HCT116 (cell line): ENCODE measurements at regions of chr19 and their contacts with region 1.

Region 1: DNA sequence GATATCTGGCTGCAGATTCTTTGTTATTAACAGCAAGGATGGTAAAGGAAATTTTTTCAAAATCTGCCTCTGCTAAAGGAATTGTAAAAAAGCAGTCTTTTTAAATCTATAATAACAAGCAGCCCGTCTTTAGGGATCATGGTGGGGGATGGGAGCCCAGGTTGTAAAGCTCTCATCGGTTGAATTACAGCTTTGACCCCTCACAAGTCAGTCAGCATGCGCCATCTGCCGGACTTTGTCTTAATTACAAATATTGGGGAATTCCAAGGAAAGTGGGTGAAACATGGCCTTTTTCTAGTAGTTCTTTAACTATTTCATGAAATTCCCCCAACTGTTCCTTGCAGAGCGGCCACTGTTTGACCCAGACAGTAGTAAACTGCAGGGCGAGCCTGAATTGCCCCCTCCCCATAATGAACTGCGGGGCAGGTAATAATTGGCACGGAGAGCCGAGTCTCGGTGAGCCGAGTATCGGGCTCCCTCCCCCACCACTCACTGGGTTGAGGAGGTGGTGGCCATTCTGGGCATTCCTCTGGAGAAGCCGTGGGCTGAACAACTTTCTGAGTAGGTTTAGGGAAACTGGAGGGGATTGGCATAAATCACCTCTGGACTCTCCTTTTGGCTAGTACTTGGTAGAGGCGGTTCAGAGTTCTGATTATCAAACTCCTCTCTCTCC is 11.6 kb downstream of the ZNF578 start:
- DNase-seq: peak; percentile 2
- ATAC-seq: no peak
- H3K4me3 ChIP-seq: no peak overlapping the region
- H3K27ac ChIP-seq: no peak overlapping the region
- H3K4me1 ChIP-seq: no peaks in the 10 kb centered on the region
- H3K27me3 ChIP-seq: no peaks in the 10 kb centered on the region
- CTCF ChIP-seq: peak in 2 of 3 experiments; percentile 18 to 32; a peak in 3 of 6 replicates
- POLR2A ChIP-seq: no peak
- RAD21 ChIP-seq: peak; percentile 34

Region 2: GRCh38 chr19:52248241-52248640 is 216.7 kb before region 1 on chr19:
- CTCF ChIA-PET with region 1: no interaction called
- POLR2A ChIA-PET with region 1: no interaction called
- RAD21 ChIA-PET with region 1: no interaction called
- intact Hi-C with region 1: loop called (anchors 10 kb)
- DNase-seq: peak; percentile 16
- ATAC-seq: peak; percentile 62; the same call in 1 of the 2 replicates
- H3K4me3 ChIP-seq: no peak overlapping the region
- H3K27ac ChIP-seq: no peak overlapping the region
- H3K4me1 ChIP-seq: no peaks in the 10 kb centered on the region
- H3K27me3 ChIP-seq: no peaks in the 10 kb centered on the region
- CTCF ChIP-seq: peak; percentile 29 to 35 (median 30); a peak in 4 of 6 replicates
- POLR2A ChIP-seq: no peak
- RAD21 ChIP-seq: peak; percentile 64

Region 3: DNA sequence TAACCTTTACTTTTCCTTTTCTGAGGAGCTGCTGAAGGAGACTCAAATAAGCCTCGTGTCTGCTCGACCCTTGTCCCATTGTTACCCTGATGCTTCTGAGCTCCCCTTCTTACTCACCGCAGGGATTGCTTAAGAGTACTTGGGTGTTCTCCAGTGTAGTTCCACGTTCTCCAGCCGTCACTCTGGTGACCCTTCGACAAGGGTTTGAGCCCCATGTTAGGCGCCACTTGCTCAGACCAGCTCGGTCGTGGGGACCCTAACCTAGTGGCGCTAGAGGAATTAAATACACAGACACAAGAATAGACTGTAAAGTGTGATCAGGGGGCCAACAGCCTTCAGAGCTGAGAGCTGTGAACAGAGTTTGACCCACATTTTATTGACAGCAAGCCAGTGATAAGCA is 157.7 kb before region 1 on chr19:
- CTCF ChIA-PET with region 1: no interaction called
- POLR2A ChIA-PET with region 1: no interaction called
- RAD21 ChIA-PET with region 1: no interaction called
- intact Hi-C with region 1: no loop called
- DNase-seq: peak; percentile 7
- ATAC-seq: no peak
- H3K4me3 ChIP-seq: no peak overlapping the region
- H3K27ac ChIP-seq: no peak overlapping the region
- H3K4me1 ChIP-seq: no peaks in the 10 kb centered on the region
- H3K27me3 ChIP-seq: no peaks in the 10 kb centered on the region
- CTCF ChIP-seq: no peak
- POLR2A ChIP-seq: no peak
- RAD21 ChIP-seq: no peak

Region 4: DNA sequence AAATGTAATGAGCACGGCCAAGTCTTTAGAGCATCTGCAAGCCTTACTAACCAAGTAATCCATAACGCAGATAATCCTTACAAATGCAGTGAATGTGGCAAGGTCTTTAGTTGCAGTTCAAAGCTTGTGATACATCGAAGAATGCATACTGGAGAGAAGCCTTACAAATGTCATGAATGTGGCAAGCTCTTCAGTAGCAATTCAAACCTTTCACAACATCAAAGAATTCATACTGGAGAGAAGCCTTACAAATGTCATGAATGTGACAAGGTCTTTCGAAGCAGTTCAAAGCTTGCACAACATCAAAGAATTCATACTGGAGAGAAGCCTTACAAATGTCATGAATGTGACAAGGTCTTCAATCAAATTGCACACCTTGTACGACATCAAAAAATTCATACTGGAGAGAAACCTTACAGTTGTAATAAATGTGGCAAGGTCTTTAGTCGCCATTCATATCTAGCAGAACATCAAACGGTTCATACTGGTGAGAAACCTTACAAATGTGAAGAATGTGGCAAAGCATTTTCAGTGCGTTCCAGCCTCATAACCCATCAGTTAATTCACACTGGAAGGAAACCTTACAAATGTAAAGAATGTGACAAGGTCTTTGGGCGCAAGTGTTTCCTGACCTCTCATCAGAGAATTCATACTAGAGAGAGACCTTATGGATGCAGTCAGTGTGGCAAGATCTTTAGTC is 49.4 kb before region 1 on chr19:
- CTCF ChIA-PET with region 1: no interaction called
- POLR2A ChIA-PET with region 1: no interaction called
- RAD21 ChIA-PET with region 1: no interaction called
- intact Hi-C with region 1: no loop called
- DNase-seq: no peak
- ATAC-seq: no peak
- H3K4me3 ChIP-seq: no peak overlapping the region
- H3K27ac ChIP-seq: no peak overlapping the region
- H3K4me1 ChIP-seq: no peaks in the 10 kb centered on the region
- H3K27me3 ChIP-seq: no peaks in the 10 kb centered on the region
- CTCF ChIP-seq: no peak
- POLR2A ChIP-seq: no peak
- RAD21 ChIP-seq: no peak

Region 5: DNA sequence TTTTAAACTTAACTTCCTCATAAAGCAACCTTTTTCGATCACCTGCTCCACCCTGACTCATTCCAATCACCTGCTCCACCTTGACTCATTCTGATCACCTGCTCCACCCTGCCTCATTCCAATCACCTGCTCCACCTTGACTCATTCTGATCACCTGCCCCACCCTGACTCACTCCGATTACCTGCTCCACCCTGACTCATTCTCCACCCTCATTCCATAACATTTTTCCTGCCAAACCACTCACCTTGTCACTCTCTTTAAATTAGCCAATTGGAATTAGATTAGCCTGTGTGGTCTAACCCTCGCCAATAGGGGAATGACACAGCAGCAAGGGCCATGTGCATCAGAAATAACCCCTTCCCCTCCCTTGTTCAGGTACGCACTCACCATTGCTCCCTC is 205.1 kb after region 1 on chr19:
- CTCF ChIA-PET with region 1: no interaction called
- POLR2A ChIA-PET with region 1: no interaction called
- RAD21 ChIA-PET with region 1: no interaction called
- intact Hi-C with region 1: no loop called
- DNase-seq: peak; percentile 75
- ATAC-seq: peak; percentile 68
- H3K4me3 ChIP-seq: no peak overlapping the region
- H3K27ac ChIP-seq: no peak overlapping the region
- H3K4me1 ChIP-seq: peaks cover 0 to 43% of the 10 kb centered on the region in 2 experiments; a peak in 2 of 4 replicates
- H3K27me3 ChIP-seq: no peaks in the 10 kb centered on the region
- CTCF ChIP-seq: no peak
- POLR2A ChIP-seq: no peak
- RAD21 ChIP-seq: no peak